OCI-LY7 (cell line): ENCODE measurements at regions of chr3 and their contacts with region 1.

Region 1: DNA sequence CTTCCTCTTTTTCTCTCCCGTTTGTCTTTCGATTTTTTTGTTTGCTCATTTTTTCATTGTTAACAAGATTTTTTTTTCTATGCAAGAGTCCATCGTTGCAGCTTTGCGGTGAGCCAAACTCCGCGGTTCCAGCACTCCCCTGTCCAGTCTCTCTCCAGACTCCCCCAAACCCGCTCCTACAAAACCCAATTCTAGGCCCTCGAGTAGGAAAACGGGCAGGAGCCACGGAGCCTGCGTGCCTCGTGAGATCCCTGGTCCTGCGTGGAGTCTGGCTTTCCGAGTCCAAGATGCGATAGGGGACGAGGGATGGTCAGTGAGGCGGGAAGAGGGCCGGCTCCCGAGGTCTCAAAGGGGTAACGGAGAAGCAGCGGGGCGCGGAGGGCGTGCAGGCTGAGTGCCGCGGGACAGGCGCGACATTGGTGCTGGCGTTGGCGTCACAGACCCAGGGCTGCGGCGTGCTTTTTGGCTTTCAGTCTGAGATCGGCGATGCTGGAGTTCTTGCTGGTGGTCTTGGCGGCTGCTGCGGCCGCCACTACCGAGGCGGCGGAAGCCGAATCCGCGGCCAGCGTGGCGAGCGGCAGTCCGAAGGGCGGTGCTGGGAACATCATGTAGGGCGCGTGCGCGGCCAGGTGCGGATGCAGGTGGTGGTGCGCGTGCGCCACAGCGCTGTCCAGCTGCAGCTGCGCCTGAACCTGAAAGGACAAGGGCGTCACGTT is 8.5 kb downstream of the SHOX2 start:
- DNase-seq: peak; percentile 84
- H3K4me3 ChIP-seq: peak overlapping the region; percentile 72
- H3K27ac ChIP-seq: peak overlapping the region; percentile 2
- H3K4me1 ChIP-seq: peaks cover 12% of the 10 kb centered on the region
- CTCF ChIP-seq: no peak

Region 2: GRCh38 chr3:157551961-157552360 is 545.8 kb before region 1 on chr3:
- CTCF ChIA-PET with region 1: no interaction called
- POLR2A ChIA-PET with region 1: no interaction called
- intact Hi-C with region 1: no loop called
- DNase-seq: no peak
- H3K4me3 ChIP-seq: no peak overlapping the region
- H3K27ac ChIP-seq: no peak overlapping the region
- H3K4me1 ChIP-seq: no peaks in the 10 kb centered on the region
- CTCF ChIP-seq: no peak

Region 3: DNA sequence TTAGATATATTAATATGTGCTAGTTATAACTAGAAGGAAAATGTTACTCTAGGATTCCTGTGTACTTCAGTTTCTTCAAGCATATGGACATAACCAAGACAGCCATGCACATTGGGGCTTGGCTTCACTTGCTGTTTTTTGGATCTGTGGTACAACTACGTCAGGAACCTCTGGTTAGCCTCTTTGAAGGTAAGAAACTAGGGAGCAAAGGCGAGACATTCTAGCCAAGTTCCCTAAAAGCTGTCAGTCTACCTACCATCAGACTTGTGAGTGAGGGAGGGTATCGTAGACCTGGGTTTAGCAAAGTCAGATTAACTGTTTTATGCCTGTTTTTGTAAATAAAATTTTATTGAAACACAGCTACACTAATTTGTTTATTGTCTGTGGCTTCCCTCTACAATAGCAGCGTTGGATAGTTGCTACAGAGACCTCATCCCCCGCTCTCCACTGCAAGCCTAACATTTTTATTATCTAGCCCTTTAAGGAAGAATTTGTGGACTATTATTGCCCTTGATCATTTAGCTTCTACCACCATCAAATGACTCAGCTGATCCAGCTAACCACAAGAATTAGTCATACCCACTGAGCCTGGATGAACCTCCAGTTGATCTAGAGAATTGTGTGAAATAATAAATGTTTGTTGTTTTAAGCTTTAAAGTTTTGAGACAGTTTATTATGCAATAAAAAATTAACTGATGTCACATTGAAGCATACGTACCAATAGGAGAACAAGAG is 70.2 kb after region 1 on chr3:
- CTCF ChIA-PET with region 1: no interaction called
- POLR2A ChIA-PET with region 1: no interaction called
- intact Hi-C with region 1: no loop called
- DNase-seq: no peak
- H3K4me3 ChIP-seq: no peak overlapping the region
- H3K27ac ChIP-seq: no peak overlapping the region
- H3K4me1 ChIP-seq: no peaks in the 10 kb centered on the region
- CTCF ChIP-seq: no peak

Region 4: GRCh38 chr3:158801696-158802408 is 704.1 kb after region 1 on chr3 and contains the start of gene MFSD1:
- CTCF ChIA-PET with region 1: no interaction called
- POLR2A ChIA-PET with region 1: no interaction called
- intact Hi-C with region 1: loop called (anchors 10 kb)
- DNase-seq: peak; percentile 91
- H3K4me3 ChIP-seq: peak within 1 kb of the TSS; percentile 93
- H3K27ac ChIP-seq: peak within 1 kb of the TSS; percentile 1
- H3K4me1 ChIP-seq: peaks cover 21% of the 10 kb centered on the region
- CTCF ChIP-seq: no peak
- total RNA-seq, gene MFSD1: 19.8 and 26.0 TPM in 2 replicates